Natural killer cell (primary cell): ENCODE measurements at regions of chr15 and their contacts with region 1.

Region 1: GRCh38 chr15:91852741-91853510 is 582 bp upstream of the SLCO3A1 start:
- DNase-seq: peak; percentile 78 to 89
- ATAC-seq: peak; percentile 59 to 83 (median 68)
- H3K4me3 ChIP-seq: peak overlapping the region; percentile 69
- H3K4me3 Mint-ChIP-seq: peak overlapping the region; percentile 86
- H3K27ac ChIP-seq: peak overlapping the region; percentile 87
- H3K27ac Mint-ChIP-seq: peak overlapping the region; percentile 77 to 88
- H3K4me1 ChIP-seq: peaks cover 54% of the 10 kb centered on the region
- H3K4me1 Mint-ChIP-seq: peaks cover 58 to 62% of the 10 kb centered on the region in 2 donors
- H3K27me3 ChIP-seq: no peaks in the 10 kb centered on the region
- H3K27me3 Mint-ChIP-seq: no peaks in the 10 kb centered on the region
- CTCF ChIP-seq: peak; percentile 88

Region 2: DNA sequence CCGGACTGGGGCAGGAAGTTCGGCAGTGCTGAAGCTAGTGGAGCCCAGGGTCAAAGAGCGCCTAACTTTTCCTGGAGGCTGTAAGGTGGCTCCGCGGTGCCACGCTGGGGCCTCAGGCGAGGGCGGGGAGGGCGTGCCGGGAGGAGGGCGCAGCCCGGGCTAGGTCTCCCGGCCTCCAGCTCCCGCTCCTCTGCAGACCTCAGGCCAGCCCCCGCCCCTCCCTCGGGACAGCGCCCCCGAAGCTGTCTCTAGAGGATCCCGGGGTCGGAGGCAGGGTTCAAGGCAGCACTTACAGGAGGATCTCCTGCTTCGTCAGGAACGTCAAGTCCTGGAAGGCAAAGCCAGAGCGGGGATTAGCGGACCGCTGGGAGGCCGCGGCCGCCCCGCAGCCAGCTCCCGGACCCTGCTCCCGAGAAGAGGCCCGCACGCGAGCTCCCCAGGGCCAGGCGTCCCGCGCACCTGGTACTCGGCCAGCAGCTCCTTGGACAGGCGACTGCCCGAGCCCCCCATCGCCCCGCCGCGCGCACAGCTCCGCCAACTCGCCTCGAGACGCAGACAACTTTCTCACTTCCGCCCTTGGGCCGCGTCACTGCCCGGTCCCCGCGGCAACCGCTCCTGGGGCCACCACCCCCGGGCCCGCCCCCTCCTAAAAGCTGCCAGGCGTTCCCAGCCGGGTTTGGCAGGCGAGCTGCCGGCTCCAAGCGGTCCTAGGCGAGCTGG is 1619.4 kb before region 1 on chr15 and contains the start of gene CIB1:
- intact Hi-C with region 1: loop called (anchors 10 kb)
- DNase-seq: peak; percentile 66 to 95
- ATAC-seq: peak; percentile 79 to 93 (median 81)
- H3K4me3 ChIP-seq: peak within 1 kb of the TSS; percentile 84
- H3K4me3 Mint-ChIP-seq: peak within 1 kb of the TSS; percentile 90
- H3K27ac ChIP-seq: peak within 1 kb of the TSS; percentile 95
- H3K27ac Mint-ChIP-seq: peak within 1 kb of the TSS; percentile 99
- H3K4me1 ChIP-seq: peaks cover 47% of the 10 kb centered on the region
- H3K4me1 Mint-ChIP-seq: peaks cover 44 to 53% of the 10 kb centered on the region in 2 donors
- H3K27me3 ChIP-seq: no peaks in the 10 kb centered on the region
- H3K27me3 Mint-ChIP-seq: no peaks in the 10 kb centered on the region
- CTCF ChIP-seq: no peak
- total RNA-seq, gene CIB1: 136 to 209 (median 154) TPM

Region 3: DNA sequence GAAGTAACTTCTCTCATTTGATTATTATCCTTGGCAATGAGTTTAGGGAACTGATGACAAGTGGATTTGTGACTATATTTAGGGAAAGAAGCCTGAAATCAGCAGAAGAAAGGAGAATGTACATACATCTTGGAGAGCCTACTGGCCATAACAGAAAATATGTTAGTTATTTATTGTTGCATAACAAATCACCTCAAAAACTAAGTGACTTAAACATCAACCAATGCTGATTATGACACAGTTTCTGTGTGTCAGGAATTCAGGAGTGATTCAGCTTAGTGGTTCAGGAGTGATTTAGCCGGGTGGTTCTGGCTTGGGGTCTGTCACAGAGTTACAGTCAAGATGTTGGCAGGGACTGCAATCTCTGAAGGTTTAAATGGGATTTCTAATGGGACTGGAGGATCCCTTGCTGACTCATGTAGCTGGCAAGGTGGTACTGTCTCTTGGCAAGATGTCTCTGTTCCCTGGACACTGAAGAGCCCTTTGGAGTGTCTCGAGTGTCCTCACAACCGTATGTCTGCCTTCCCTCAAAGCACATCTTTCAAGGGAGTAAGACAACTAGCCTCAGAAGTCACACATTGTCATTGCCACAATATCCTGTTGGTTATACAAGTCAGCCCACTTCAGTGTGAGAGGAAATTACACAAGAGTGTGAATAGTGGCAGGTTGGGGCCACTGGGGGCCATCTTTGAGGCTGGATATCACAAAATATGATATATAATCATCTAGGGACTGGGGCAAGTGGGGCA is 504.0 kb before region 1 on chr15:
- intact Hi-C with region 1: loop called (anchors 2 kb)
- DNase-seq: peak; percentile 40 to 58
- ATAC-seq: peak; percentile 91 to 99 (median 95)
- H3K4me3 ChIP-seq: no peak overlapping the region
- H3K4me3 Mint-ChIP-seq: peak overlapping the region; percentile 72
- H3K27ac ChIP-seq: no peak overlapping the region
- H3K27ac Mint-ChIP-seq: peak overlapping the region; percentile 62 to 83
- H3K4me1 ChIP-seq: peaks cover 17% of the 10 kb centered on the region
- H3K4me1 Mint-ChIP-seq: peaks cover 41 to 61% of the 10 kb centered on the region in 2 donors
- H3K27me3 ChIP-seq: peaks cover 35% of the 10 kb centered on the region
- H3K27me3 Mint-ChIP-seq: peaks cover 51 to 81% of the 10 kb centered on the region in 2 donors
- CTCF ChIP-seq: no peak

Region 4: GRCh38 chr15:91750152-91750551 is 102.8 kb before region 1 on chr15:
- intact Hi-C with region 1: no loop called
- DNase-seq: no peak
- ATAC-seq: no peak
- H3K4me3 ChIP-seq: no peak overlapping the region
- H3K4me3 Mint-ChIP-seq: no peak overlapping the region
- H3K27ac ChIP-seq: no peak overlapping the region
- H3K27ac Mint-ChIP-seq: no peak overlapping the region
- H3K4me1 ChIP-seq: no peaks in the 10 kb centered on the region
- H3K4me1 Mint-ChIP-seq: peaks cover 0 to 6% of the 10 kb centered on the region in 2 donors
- H3K27me3 ChIP-seq: no peaks in the 10 kb centered on the region
- H3K27me3 Mint-ChIP-seq: peaks cover 3 to 14% of the 10 kb centered on the region in 2 donors
- CTCF ChIP-seq: no peak

Region 5: DNA sequence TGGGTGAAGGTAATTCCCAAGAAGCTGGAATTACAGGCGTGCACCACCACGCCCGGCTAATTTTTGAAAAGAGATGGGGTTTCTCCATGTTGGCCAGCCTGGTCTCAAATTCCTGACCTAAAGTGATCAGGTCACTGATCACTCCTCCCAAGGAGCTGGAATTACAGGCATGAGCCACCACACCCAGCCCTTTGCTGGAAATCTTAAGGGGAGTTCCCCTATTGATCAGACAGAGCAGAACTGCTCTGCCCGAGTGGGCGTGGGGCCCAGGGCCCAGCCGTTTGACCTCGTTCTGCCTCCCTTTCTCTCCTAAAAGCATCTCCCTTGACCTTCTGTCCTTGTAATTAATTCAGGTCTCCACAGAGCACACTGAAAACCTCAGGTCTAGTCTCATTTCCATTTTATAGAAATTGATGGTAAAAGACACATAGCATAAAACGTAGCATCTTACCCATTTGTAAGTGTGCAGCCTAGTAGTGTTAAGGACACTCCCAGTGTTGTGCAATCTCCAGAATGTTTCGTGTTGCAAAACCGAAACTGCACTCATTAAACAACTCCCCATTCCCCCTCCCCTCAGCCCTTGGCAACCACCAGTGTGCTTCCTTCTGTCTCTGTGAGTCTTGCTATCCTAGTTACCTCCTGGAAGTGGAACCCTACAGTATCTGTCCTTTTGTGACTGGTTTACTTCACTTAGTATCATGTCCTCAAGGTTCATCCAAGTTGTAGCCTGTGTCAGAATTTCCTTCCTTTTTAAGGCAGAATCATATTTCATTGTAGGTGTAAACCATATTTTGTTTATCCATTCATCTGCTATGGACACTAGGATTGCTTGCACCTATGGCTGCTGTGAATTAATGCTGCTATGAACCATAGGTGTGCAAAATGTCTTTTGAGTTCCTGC is 90.0 kb after region 1 on chr15:
- intact Hi-C with region 1: loop called (anchors 5 kb)
- DNase-seq: peak; percentile 36 to 70
- ATAC-seq: peak; percentile 93 to 98 (median 97)
- H3K4me3 ChIP-seq: no peak overlapping the region
- H3K4me3 Mint-ChIP-seq: peak overlapping the region; percentile 83
- H3K27ac ChIP-seq: peak overlapping the region; percentile 59
- H3K27ac Mint-ChIP-seq: peak overlapping the region; percentile 75 to 89
- H3K4me1 ChIP-seq: peaks cover 43% of the 10 kb centered on the region
- H3K4me1 Mint-ChIP-seq: peaks cover 86 to 93% of the 10 kb centered on the region in 2 donors
- H3K27me3 ChIP-seq: no peaks in the 10 kb centered on the region
- H3K27me3 Mint-ChIP-seq: no peaks in the 10 kb centered on the region
- CTCF ChIP-seq: no peak

Region 6: GRCh38 chr15:92097474-92098178 is 244.7 kb after region 1 on chr15:
- intact Hi-C with region 1: loop called (anchors 5 kb)
- DNase-seq: peak; percentile 28 to 70
- ATAC-seq: peak; percentile 54 to 60 (median 55)
- H3K4me3 ChIP-seq: no peak overlapping the region
- H3K4me3 Mint-ChIP-seq: peak overlapping the region; percentile 65
- H3K27ac ChIP-seq: no peak overlapping the region
- H3K27ac Mint-ChIP-seq: peak overlapping the region; percentile 73 to 91
- H3K4me1 ChIP-seq: peaks cover 51% of the 10 kb centered on the region
- H3K4me1 Mint-ChIP-seq: peaks cover 73 to 74% of the 10 kb centered on the region in 2 donors
- H3K27me3 ChIP-seq: no peaks in the 10 kb centered on the region
- H3K27me3 Mint-ChIP-seq: no peaks in the 10 kb centered on the region
- CTCF ChIP-seq: peak; percentile 80